ENCODE measurements at regions of chr18 and their contacts with region 1.

Region 1: DNA sequence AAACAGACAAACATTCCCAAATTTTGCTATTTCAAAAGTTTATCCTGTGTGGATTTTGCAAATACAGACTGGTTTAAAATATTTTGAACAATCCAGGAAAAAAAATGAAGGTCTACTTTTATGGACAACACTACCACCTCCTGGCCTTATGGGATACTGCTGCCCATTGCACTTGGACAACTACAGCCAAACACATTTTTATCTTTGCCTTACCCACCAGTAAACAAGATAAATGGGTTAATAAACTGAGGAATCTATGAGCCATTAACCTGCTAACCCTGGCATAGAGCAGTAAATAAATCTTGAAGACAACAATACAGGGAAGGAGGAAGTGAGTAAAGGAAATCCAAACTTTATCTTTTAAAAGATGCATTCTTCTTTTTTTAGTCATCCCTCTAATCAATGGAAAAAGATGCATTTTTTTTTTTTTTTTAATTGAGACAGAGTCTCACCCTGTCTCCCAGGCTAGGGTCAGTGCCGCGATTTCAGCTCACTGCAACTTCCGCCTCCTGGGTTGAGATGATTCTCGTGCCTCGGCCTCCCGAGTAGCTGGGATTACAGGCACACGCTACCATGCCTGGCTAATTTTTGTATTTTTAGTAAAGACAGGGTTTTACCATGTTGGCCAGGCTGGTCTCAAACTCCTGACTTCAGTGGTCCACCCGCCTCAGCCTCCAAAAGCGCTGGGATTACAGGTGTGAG is 2.1 kb upstream of the SPIRE1 start:
- DNase-seq: peak; percentile 67 to 71
- H3K4me3 ChIP-seq: no peak overlapping the region
- H3K4me1 ChIP-seq: peaks cover 19% of the 10 kb centered on the region
- H3K27me3 ChIP-seq: no peaks in the 10 kb centered on the region

Region 2: GRCh38 chr18:12391618-12392165 is 268.4 kb before region 1 on chr18:
- in situ Hi-C with region 1: loop called (anchors 5 kb)
- DNase-seq: peak; percentile 57 to 73
- H3K4me3 ChIP-seq: no peak overlapping the region
- H3K4me1 ChIP-seq: no peaks in the 10 kb centered on the region
- H3K27me3 ChIP-seq: no peaks in the 10 kb centered on the region

Measured in HAP-1 (cell line).